CD4-positive, alpha-beta memory T cell (primary cell): ENCODE measurements at regions of chr15 and their contacts with region 1.

Region 1: GRCh38 chr15:34241372-34242330 is 16.8 kb downstream of the EMC4 start:
- DNase-seq: peak; percentile 42 to 56 (median 55)
- H3K4me3 ChIP-seq: no peak overlapping the region
- H3K4me3 Mint-ChIP-seq: no peak overlapping the region
- H3K27ac ChIP-seq: no peak overlapping the region
- H3K27ac Mint-ChIP-seq: peak overlapping the region in 4 of 7 donors; percentile 4 to 53 (median 46)
- H3K4me1 ChIP-seq: no peaks in the 10 kb centered on the region
- H3K4me1 Mint-ChIP-seq: no peaks in the 10 kb centered on the region
- H3K27me3 ChIP-seq: no peaks in the 10 kb centered on the region
- H3K27me3 Mint-ChIP-seq: no peaks in the 10 kb centered on the region

Region 2: DNA sequence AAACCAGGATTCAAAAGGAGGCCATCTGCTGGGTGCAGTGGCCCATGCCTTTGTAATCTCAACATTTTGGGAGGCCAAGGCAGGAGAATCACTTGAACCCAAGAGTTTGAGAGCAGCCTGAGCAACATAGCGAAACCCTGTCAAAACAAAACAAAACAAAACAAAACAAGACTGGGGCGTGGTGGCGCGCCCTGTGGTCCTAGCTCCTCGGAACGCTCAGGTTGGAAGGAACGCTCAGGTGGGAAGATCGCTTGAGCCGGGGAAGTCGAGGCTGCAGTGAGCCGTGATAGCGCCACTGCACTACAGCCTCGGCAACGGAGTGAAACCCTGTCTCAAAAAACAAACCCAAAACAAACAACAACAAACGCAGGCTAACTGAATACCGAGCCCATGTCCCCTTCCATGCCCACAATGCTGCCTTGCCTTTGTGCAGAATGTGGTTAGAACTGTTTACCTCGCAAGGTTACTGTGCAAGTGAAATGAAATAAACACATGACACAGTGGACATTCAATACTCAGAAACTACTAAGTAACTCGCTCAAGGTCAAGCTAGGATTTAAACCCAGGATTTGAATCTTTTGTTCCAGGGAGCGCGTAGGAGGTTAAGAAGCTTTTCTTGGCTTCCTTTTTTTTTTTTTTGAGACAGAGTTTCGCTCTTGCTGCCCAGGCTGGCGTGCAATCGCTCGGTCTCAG is 17.6 kb before region 1 on chr15:
- CTCF ChIA-PET with region 1: interaction called, 17 read pairs
- POLR2A ChIA-PET with region 1: no interaction called
- intact Hi-C with region 1: no loop called
- DNase-seq: no peak
- H3K4me3 ChIP-seq: peak overlapping the region; percentile 88 to 93
- H3K4me3 Mint-ChIP-seq: peak overlapping the region; percentile 90 to 99 (median 96)
- H3K27ac ChIP-seq: peak overlapping the region; percentile 89
- H3K27ac Mint-ChIP-seq: peak overlapping the region; percentile 92 to 100 (median 99)
- H3K4me1 ChIP-seq: peaks cover 25% of the 10 kb centered on the region
- H3K4me1 Mint-ChIP-seq: peaks cover 21 to 32% (median 25%) of the 10 kb centered on the region in 4 donors
- H3K27me3 ChIP-seq: no peaks in the 10 kb centered on the region
- H3K27me3 Mint-ChIP-seq: peaks cover 3% of the 10 kb centered on the region in 2 donors

Region 3: GRCh38 chr15:34271493-34271892 is 29.8 kb after region 1 on chr15:
- CTCF ChIA-PET with region 1: no interaction called
- POLR2A ChIA-PET with region 1: no interaction called
- intact Hi-C with region 1: no loop called
- DNase-seq: no peak
- H3K4me3 ChIP-seq: no peak overlapping the region
- H3K4me3 Mint-ChIP-seq: no peak overlapping the region
- H3K27ac ChIP-seq: no peak overlapping the region
- H3K27ac Mint-ChIP-seq: peak overlapping the region in 2 of 7 donors; percentile 22 to 46
- H3K4me1 ChIP-seq: no peaks in the 10 kb centered on the region
- H3K4me1 Mint-ChIP-seq: peaks cover 0 to 6% (median 0%) of the 10 kb centered on the region in 4 donors
- H3K27me3 ChIP-seq: no peaks in the 10 kb centered on the region
- H3K27me3 Mint-ChIP-seq: no peaks in the 10 kb centered on the region

Region 4: DNA sequence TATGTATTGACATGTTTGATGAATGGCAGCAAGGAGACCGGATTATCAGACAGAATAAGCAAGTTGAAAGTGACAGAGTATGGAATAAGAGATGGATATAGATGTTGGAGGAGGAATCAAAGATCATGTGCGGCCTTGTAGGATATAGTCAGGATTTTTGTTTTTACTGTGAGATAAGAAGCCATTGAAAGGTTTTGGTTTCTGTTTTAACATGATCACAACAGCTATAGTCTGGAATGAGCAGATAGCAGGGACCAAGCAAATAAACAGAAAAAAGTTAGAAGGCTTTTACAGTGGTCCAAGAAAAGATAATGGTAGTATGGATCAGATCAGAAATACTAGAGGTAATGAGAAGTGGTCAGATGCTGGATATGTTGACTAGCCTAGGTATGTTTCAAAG is 43.3 kb after region 1 on chr15:
- CTCF ChIA-PET with region 1: no interaction called
- POLR2A ChIA-PET with region 1: no interaction called
- intact Hi-C with region 1: no loop called
- DNase-seq: no peak
- H3K4me3 ChIP-seq: no peak overlapping the region
- H3K4me3 Mint-ChIP-seq: peak overlapping the region in 4 of 8 donors; percentile 4 to 38 (median 22)
- H3K27ac ChIP-seq: no peak overlapping the region
- H3K27ac Mint-ChIP-seq: peak overlapping the region; percentile 8 to 80 (median 37)
- H3K4me1 ChIP-seq: peaks cover 6% of the 10 kb centered on the region
- H3K4me1 Mint-ChIP-seq: peaks cover 11 to 23% (median 15%) of the 10 kb centered on the region in 4 donors
- H3K27me3 ChIP-seq: no peaks in the 10 kb centered on the region
- H3K27me3 Mint-ChIP-seq: no peaks in the 10 kb centered on the region

Region 5: DNA sequence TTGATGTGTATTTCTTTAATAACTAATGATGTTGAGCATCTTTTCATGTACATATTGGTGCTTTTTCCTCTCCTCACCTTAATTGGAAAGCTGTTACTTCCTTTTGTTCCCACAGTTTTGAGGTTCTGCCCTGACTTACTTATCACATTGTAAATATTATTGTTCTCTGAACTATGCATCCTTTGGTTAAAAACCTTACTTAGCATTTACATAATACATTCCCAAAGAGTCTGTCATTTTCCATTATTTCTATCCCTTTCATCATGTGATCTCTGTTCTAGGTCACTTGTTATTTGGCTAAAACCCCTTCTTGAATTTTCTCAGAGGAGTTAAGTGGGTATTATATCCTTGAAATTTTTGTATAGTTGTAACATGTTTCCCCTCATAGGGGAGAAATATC is 63.0 kb after region 1 on chr15:
- CTCF ChIA-PET with region 1: no interaction called
- POLR2A ChIA-PET with region 1: no interaction called
- intact Hi-C with region 1: no loop called
- DNase-seq: no peak
- H3K4me3 ChIP-seq: no peak overlapping the region
- H3K4me3 Mint-ChIP-seq: no peak overlapping the region
- H3K27ac ChIP-seq: no peak overlapping the region
- H3K27ac Mint-ChIP-seq: peak overlapping the region in 2 of 7 donors; percentile 35 to 65
- H3K4me1 ChIP-seq: no peaks in the 10 kb centered on the region
- H3K4me1 Mint-ChIP-seq: peaks cover 17 to 41% (median 33%) of the 10 kb centered on the region in 4 donors
- H3K27me3 ChIP-seq: no peaks in the 10 kb centered on the region
- H3K27me3 Mint-ChIP-seq: no peaks in the 10 kb centered on the region

Region 6: DNA sequence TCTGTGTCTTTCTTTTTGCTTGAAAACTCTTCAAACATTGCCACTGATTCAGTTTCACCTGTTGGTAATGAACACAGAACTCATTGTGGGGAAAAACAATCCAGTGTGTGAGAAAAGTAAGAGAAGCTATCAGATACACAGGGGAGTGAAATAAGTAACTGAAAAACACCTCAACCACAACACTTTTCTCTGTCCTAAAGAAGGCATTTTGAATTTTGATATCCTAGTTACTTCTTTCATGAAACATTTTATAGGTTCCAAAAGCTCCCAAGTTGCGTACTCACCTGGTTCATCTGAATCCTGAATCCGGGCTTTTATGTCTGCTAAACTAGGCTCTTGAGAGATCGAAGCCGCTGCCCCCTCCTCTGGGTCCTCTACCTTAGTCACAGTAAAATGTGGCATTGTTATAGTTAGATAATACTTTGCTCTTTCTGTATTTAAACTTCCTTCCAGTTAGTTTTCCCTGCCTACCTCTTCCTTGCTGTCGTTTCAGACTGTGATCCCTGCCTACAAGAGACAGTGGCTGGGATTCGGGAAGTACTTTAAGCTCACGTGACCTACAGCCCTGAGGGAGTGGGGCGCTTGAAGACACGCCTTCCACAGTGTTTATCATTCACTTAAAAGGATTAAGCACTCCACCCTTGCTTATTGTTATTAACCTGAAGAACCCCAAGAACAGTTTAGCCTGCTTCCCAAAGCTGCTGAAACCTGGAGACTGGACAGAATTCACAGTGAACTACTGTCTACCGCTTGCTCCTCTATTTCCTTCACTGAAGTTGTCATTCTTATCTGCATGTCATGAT is 76.8 kb after region 1 on chr15:
- CTCF ChIA-PET with region 1: interaction called, 10 read pairs
- POLR2A ChIA-PET with region 1: no interaction called
- intact Hi-C with region 1: no loop called
- DNase-seq: peak in 4 of 5 donors; percentile 12 to 50 (median 22)
- H3K4me3 ChIP-seq: peak overlapping the region; percentile 52 to 55
- H3K4me3 Mint-ChIP-seq: peak overlapping the region; percentile 93 to 99 (median 98)
- H3K27ac ChIP-seq: peak overlapping the region; percentile 49
- H3K27ac Mint-ChIP-seq: peak overlapping the region; percentile 65 to 96 (median 94)
- H3K4me1 ChIP-seq: peaks cover 31% of the 10 kb centered on the region
- H3K4me1 Mint-ChIP-seq: peaks cover 31 to 45% (median 38%) of the 10 kb centered on the region in 4 donors
- H3K27me3 ChIP-seq: no peaks in the 10 kb centered on the region
- H3K27me3 Mint-ChIP-seq: no peaks in the 10 kb centered on the region

Region 7: DNA sequence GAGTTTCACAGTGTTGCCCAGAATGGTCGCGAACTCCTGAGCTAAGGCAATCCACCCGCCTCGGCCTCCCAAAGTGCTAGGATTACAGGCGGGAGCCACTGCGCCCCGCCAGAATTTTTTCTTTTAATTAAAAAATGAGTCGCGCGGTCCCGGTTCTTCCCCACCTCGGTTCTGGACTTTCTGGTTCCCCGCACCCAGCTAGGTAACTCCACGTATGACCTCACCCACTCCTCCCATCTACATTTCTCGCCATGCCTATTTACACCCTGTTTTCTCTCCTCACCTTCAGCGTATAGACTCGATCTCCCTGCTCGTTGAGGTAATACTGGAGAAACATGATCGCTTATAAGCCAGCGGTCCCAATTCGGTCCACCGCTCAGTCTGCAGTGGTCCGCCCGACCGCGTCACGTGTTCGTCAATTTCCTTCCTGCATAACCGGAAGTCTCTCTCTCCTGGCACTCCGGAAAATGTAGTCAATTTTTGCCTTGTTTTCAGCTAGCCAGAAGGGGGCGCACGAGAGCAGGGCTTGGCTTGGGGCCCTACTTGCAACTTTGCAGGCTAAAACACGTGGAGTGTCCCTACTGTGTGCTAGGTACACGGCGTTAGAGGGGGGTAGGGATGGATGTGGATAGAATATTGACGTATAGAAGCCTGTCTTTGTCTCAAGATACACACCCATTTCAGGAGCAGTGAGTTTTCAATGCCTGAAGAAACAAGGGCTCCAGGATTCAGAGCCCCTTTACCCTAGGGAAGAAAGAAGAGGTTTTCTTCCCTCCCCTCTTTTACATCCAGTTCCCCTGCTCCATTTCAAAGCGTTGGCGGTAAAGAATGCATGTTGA is 101.3 kb after region 1 on chr15 and contains the starts of genes NOP10 and NUTM1:
- CTCF ChIA-PET with region 1: interaction called, 22 read pairs
- POLR2A ChIA-PET with region 1: interaction called, 21 read pairs
- intact Hi-C with region 1: loop called (anchors 1 kb)
- DNase-seq: peak; percentile 91 to 93 (median 92)
- H3K4me3 ChIP-seq: peak within 1 kb of the TSS; percentile 54 to 96
- H3K4me3 Mint-ChIP-seq: peak within 1 kb of the TSS in 2 of 8 donors; percentile 87
- H3K27ac ChIP-seq: peak within 1 kb of the TSS; percentile 73
- H3K27ac Mint-ChIP-seq: peak within 1 kb of the TSS in 5 of 7 donors; percentile 77 to 93 (median 88)
- H3K4me1 ChIP-seq: peaks cover 28% of the 10 kb centered on the region
- H3K4me1 Mint-ChIP-seq: peaks cover 14 to 31% (median 17%) of the 10 kb centered on the region in 4 donors
- H3K27me3 ChIP-seq: no peaks in the 10 kb centered on the region
- H3K27me3 Mint-ChIP-seq: no peaks in the 10 kb centered on the region
- total RNA-seq, gene NOP10: 73.5 to 77.2 TPM
- total RNA-seq, gene NUTM1: not detected

Region 8: DNA sequence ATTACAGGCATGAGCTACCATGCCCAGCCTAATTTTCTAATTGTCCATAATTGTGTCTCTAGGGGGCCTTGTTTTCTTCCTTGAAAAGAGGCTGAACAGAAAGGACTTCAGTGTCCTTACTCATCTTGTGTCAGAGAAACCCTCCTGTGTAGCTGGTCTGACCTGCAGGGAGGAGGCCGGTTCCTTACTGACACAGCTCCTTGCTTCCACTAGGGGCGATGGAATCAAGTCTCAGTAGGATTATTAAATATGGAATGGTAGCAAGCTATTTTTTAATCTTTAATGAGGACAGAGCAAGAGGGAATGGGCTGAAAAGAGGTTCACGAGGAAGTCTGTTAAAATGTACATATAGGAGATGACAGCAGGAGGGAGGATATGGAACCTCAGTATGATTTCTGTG is 116.7 kb after region 1 on chr15:
- CTCF ChIA-PET with region 1: interaction called, 10 read pairs
- POLR2A ChIA-PET with region 1: no interaction called
- intact Hi-C with region 1: no loop called
- DNase-seq: no peak
- H3K4me3 ChIP-seq: no peak overlapping the region
- H3K4me3 Mint-ChIP-seq: no peak overlapping the region
- H3K27ac ChIP-seq: no peak overlapping the region
- H3K27ac Mint-ChIP-seq: peak overlapping the region in 1 of 7 donors; percentile 28
- H3K4me1 ChIP-seq: no peaks in the 10 kb centered on the region
- H3K4me1 Mint-ChIP-seq: peaks cover 0 to 11% (median 3%) of the 10 kb centered on the region in 4 donors
- H3K27me3 ChIP-seq: no peaks in the 10 kb centered on the region
- H3K27me3 Mint-ChIP-seq: no peaks in the 10 kb centered on the region

Region 9: GRCh38 chr15:34437687-34438086 is 196.0 kb after region 1 on chr15 and contains the start of gene GOLGA8A:
- CTCF ChIA-PET with region 1: no interaction called
- POLR2A ChIA-PET with region 1: no interaction called
- intact Hi-C with region 1: loop called (anchors 10 kb)
- DNase-seq: peak in 4 of 5 donors; percentile 72 to 88 (median 84)
- H3K4me3 ChIP-seq: peak within 1 kb of the TSS; percentile 23 to 68
- H3K4me3 Mint-ChIP-seq: peak within 1 kb of the TSS in 7 of 8 donors; percentile 91 to 97 (median 94)
- H3K27ac ChIP-seq: peak within 1 kb of the TSS; percentile 35
- H3K27ac Mint-ChIP-seq: peak within 1 kb of the TSS in 6 of 7 donors; percentile 92 to 97 (median 95)
- H3K4me1 ChIP-seq: peaks cover 16% of the 10 kb centered on the region
- H3K4me1 Mint-ChIP-seq: peaks cover 0 to 25% (median 7%) of the 10 kb centered on the region in 4 donors
- H3K27me3 ChIP-seq: no peaks in the 10 kb centered on the region
- H3K27me3 Mint-ChIP-seq: peaks cover 0 to 1% of the 10 kb centered on the region in 2 donors
- total RNA-seq, gene GOLGA8A: 188 to 193 TPM